Caco-2 (cell line): ENCODE measurements at regions of chr7 and their contacts with region 1.

Region 1: DNA sequence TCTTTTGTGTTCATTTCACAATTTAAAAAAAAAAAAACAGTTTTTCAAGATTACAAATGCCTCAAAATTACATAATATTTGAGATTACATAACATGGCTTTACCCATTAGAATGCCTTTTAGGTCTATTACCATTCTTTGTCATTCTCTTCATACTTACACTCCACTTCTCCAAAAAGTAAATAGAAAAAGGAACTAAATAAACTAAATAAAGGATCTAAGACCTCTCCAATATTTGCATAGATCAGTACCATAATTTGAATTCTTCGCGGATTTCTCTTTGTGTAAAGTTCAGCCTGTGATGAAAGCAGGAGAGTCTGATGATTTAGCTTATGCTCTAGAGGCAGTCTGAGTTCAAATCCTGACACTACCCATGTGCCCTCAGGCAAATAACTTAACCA is 56.4 kb upstream of the C1GALT1 start:
- DNase-seq: peak in 1 of 2 experiments; percentile 51
- H3K4me3 ChIP-seq: no peak overlapping the region
- H3K4me3 Mint-ChIP-seq: no peak overlapping the region
- H3K27ac Mint-ChIP-seq: no peak overlapping the region
- H3K4me1 ChIP-seq: peaks cover 34% of the 10 kb centered on the region
- H3K4me1 Mint-ChIP-seq: peaks cover 27% of the 10 kb centered on the region
- H3K27me3 ChIP-seq: no peaks in the 10 kb centered on the region
- H3K27me3 Mint-ChIP-seq: no peaks in the 10 kb centered on the region
- CTCF ChIP-seq: no peak

Region 2: DNA sequence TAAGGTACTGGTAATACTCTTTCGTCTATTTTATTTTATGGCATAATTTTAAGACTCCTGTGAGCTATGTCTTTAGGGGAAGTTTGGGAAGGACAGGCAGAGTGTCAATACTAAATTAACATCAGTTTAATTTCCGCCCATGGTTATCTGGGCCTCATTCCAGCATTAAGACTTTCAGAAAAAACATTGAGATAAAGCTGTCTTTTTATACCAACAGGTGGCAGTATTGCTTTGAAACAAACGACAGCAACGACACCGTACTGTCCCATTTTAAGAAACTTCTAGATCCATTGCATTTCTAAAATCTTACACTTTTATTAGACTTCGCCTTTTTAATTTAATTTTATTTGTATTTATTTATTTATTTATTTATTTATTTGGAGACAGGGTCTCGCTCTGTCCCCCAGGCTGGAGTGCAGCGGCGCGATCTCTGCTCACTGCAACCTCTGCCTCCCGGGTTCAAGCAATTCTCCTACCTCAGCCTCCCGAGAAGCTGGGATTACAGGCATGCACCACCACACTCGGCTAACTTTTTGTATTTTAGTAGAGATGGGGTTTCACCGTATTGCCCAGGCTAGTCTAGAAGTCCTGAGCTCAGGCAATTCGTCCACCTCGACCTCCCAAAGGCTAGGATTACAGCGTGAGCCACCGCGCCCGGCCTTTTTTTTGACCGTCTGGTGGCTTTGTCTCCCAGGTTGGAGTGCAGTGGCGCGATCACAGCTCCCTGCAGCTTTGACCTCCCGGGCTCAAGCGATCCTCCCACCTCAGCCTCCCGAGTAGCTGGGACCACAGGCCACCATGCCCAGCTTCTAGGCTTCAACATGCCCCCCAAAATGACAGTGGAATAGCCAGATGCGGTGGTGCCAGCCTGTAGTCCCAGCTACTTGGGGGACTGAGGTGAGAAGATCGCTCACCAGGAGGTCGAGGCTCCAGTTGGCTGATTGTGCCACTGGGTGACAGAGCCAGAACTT is 22.3 kb before region 1 on chr7:
- CTCF ChIA-PET with region 1: no interaction called
- POLR2A ChIA-PET with region 1: no interaction called
- intact Hi-C with region 1: no loop called
- DNase-seq: peak in 1 of 2 experiments; percentile 44
- H3K4me3 ChIP-seq: no peak overlapping the region
- H3K4me3 Mint-ChIP-seq: no peak overlapping the region
- H3K27ac Mint-ChIP-seq: peak overlapping the region; percentile 28
- H3K4me1 ChIP-seq: peaks cover 23% of the 10 kb centered on the region
- H3K4me1 Mint-ChIP-seq: peaks cover 34% of the 10 kb centered on the region
- H3K27me3 ChIP-seq: no peaks in the 10 kb centered on the region
- H3K27me3 Mint-ChIP-seq: no peaks in the 10 kb centered on the region
- CTCF ChIP-seq: peak; percentile 52 to 64

Region 3: GRCh38 chr7:7114706-7115295 is 11.2 kb before region 1 on chr7:
- CTCF ChIA-PET with region 1: no interaction called
- POLR2A ChIA-PET with region 1: no interaction called
- intact Hi-C with region 1: loop called (anchors 1 kb)
- DNase-seq: peak; percentile 55 to 63
- H3K4me3 ChIP-seq: no peak overlapping the region
- H3K4me3 Mint-ChIP-seq: peak overlapping the region; percentile 23
- H3K27ac Mint-ChIP-seq: peak overlapping the region; percentile 6
- H3K4me1 ChIP-seq: peaks cover 64% of the 10 kb centered on the region
- H3K4me1 Mint-ChIP-seq: peaks cover 64% of the 10 kb centered on the region
- H3K27me3 ChIP-seq: no peaks in the 10 kb centered on the region
- H3K27me3 Mint-ChIP-seq: no peaks in the 10 kb centered on the region
- CTCF ChIP-seq: no peak